ENCODE measurements at regions of chr3 and their contacts with region 1.

Region 1: DNA sequence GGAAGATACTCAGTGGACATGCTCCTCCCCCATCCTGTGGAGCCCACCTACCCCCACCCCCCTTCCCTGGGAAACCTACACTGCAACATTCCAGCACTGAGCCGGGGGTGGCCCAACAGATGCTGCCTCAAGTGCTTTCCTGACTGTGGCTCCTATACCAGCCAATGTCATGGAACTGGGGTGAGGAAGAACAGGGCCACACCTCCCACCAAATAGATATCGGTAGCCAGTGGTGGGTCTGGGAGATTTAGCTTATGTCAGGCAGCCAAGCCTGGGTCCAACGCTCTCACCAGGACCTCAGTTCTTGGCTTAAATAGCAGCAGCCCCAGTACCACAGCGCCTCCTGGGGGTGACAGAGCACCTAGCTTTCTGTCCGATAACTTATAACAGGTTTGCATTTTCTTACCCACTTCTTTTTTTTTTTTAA is 30.3 kb downstream of the CDC25A start:
- DNase-seq: peak; percentile 77
- ATAC-seq: peak; percentile 70 to 72

Region 2: GRCh38 chr3:47836986-47837385 is 321.0 kb before region 1 on chr3:
- intact Hi-C with region 1: loop called (anchors 5 kb)
- DNase-seq: no peak
- ATAC-seq: no peak

Measured in left cardiac atrium (tissue), 4 donors.